ENCODE measurements at regions of chr10 and their contacts with region 1.

Region 1: DNA sequence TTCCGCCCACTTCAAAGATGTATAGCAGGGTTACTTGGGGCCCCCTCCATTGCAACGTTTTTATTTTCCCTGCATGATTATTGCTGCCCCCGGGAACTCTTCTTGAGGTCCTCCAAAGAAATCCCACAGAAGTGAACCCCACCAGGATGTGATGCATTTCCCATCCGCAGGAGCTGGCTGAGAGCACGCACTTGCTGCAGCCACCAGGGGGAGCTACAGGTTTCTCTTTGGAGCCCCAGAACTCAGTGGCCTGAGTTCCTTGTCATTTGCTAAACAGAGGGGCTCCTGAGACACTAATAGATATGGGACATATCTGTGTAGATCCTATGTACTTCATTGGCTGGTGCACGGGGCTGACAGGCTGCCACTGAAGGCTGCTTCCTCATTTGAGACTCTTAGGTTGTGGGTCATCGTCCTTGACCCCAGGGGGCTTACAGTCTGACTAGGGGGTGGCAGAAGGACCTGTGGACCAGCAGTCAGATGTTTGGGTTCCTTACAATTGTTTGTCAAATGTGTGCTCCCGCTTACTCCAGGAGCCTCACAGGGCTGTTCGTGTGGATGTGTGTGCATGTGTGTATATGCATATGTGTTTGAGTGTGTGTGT is 52.3 kb upstream of the ENO4 start:
- DNase-seq: peak; percentile 76 to 90
- H3K4me3 ChIP-seq: no peak overlapping the region
- H3K27ac ChIP-seq: no peak overlapping the region
- H3K4me1 ChIP-seq: no peaks in the 10 kb centered on the region
- H3K27me3 ChIP-seq: peaks cover 0 to 50% (median 10%) of the 10 kb centered on the region in 3 donors
- CTCF ChIP-seq: peak in 5 of 7 experiments; percentile 73 to 92 (median 84)
- EP300 ChIP-seq: no peak
- POLR2A ChIP-seq: no peak

Region 2: DNA sequence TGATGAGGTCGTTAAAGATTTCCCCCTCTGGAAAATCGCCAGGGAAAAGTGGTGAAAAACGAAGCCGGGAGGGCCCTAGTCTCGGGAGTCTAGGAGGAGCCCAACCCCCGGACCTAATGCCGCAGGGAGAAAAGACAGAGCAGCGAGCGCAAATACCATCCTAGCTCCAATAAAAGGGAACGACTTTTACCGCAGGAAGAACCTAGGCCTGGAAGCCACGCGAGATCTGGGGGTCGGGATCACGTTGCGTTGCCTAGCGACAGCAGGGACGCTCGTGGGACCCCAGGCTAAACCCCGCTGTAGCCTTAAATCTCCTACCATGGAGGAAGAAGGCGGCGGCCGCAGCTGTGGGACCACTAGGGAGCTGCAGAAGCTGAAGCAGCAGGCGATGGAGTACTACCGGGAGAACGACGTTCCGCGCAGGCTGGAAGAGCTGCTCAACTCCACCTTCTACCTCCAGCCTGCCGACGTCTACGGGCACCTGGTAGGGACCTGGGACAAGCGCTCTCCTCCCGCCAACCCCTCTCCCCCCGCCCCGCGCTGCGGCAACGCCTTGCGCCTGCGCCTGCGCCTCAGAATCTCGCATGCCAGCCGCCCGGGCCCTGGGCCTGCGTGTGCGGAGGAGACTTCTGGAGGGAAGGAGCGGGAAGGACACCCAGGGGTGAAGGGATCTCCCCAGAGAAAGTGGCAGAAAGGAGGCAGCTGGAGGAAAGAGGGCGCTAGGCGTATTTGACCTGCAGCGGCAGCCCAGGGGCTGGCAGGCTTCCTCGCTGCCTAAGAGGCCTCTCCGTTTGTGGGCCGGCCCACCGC is 52.4 kb after region 1 on chr10 and contains the start of gene ENO4:
- intact Hi-C with region 1: no loop called
- DNase-seq: peak; percentile 85 to 96
- H3K4me3 ChIP-seq: peak within 1 kb of the TSS; percentile 65 to 75 (median 68)
- H3K27ac ChIP-seq: peak within 1 kb of the TSS; percentile 25 to 76 (median 62)
- H3K4me1 ChIP-seq: peaks cover 6 to 25% (median 20%) of the 10 kb centered on the region in 4 donors
- H3K27me3 ChIP-seq: peaks cover 0 to 28% (median 0%) of the 10 kb centered on the region in 3 donors
- CTCF ChIP-seq: no peak
- EP300 ChIP-seq: no peak
- POLR2A ChIP-seq: no peak
- total RNA-seq, gene ENO4: 0.55 to 2.2 TPM in 2 of 5 donors, not detected in the others

Region 3: GRCh38 chr10:117014835-117015234 is 217.8 kb after region 1 on chr10:
- intact Hi-C with region 1: no loop called
- DNase-seq: no peak
- H3K4me3 ChIP-seq: no peak overlapping the region
- H3K27ac ChIP-seq: no peak overlapping the region
- H3K4me1 ChIP-seq: no peaks in the 10 kb centered on the region
- H3K27me3 ChIP-seq: no peaks in the 10 kb centered on the region
- CTCF ChIP-seq: no peak
- EP300 ChIP-seq: no peak
- POLR2A ChIP-seq: no peak

Region 4: GRCh38 chr10:117174439-117175214 is 377.6 kb after region 1 on chr10:
- intact Hi-C with region 1: loop called (anchors 2 kb)
- DNase-seq: peak; percentile 81 to 93
- H3K4me3 ChIP-seq: peak overlapping the region; percentile 38 to 68 (median 51)
- H3K27ac ChIP-seq: no peak overlapping the region
- H3K4me1 ChIP-seq: peaks cover 8 to 17% (median 13%) of the 10 kb centered on the region in 4 donors
- H3K27me3 ChIP-seq: peaks cover 0 to 73% (median 37%) of the 10 kb centered on the region in 3 donors
- CTCF ChIP-seq: peak in 5 of 7 experiments; percentile 70 to 89 (median 79)
- EP300 ChIP-seq: no peak
- POLR2A ChIP-seq: no peak